A673 (cell line): ENCODE measurements at regions of chr2 and their contacts with region 1.

Region 1: GRCh38 chr2:55431982-55432627 is 12.4 kb upstream of the CCDC88A start:
- DNase-seq: peak; percentile 46
- H3K4me3 ChIP-seq: no peak overlapping the region
- H3K27ac ChIP-seq: no peak overlapping the region
- H3K4me1 ChIP-seq: peaks cover 9% of the 10 kb centered on the region
- H3K27me3 ChIP-seq: no peaks in the 10 kb centered on the region
- CTCF ChIP-seq: peak; percentile 73

Region 2: DNA sequence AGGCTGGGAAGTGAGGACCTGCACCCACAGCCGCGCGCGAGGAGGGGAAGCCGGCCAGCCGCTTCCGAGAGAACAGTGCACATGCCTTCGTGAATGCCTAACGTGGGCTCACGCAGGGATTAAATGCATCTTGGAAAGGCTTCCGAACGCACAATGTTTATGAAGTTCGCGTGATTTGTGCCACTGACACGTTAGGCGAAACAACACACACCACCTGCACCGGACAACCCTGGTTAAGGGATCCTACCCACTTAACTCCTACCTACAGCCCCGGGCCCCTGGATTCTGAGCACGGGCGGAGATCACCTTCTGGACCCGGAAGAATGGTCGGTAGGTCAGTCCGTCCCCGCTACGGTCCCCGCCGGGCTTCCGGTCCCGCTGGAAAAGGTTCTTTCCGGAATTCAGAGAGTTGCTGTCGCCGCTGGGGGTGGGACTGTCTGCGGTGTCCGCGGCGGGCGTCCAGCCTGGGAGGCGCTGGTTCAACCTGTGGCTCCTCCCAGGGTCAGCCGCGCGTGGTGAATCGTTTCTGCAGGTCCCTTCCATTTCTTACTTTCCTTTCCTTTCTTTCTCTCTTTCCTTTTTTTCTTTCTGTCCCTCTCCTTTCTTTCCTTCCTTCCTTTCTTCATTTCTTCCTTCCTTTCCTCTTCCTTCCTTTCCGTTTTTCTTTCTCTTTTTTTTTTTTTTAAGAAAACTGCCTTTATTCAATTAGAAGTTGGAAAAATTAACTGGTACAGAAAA is 163.0 kb before region 1 on chr2 and contains the start of gene MTIF2:
- CTCF ChIA-PET with region 1: no interaction called
- POLR2A ChIA-PET with region 1: no interaction called
- intact Hi-C with region 1: loop called (anchors 10 kb)
- DNase-seq: peak; percentile 95
- H3K4me3 ChIP-seq: peak within 1 kb of the TSS; percentile 65
- H3K27ac ChIP-seq: peak within 1 kb of the TSS; percentile 72
- H3K4me1 ChIP-seq: no peaks in the 10 kb centered on the region
- H3K27me3 ChIP-seq: no peaks in the 10 kb centered on the region
- CTCF ChIP-seq: no peak
- total RNA-seq, gene MTIF2: 45.0 and 52.3 TPM in 2 replicates